ENCODE measurements at regions of chr6 and their contacts with region 1.

Region 1: DNA sequence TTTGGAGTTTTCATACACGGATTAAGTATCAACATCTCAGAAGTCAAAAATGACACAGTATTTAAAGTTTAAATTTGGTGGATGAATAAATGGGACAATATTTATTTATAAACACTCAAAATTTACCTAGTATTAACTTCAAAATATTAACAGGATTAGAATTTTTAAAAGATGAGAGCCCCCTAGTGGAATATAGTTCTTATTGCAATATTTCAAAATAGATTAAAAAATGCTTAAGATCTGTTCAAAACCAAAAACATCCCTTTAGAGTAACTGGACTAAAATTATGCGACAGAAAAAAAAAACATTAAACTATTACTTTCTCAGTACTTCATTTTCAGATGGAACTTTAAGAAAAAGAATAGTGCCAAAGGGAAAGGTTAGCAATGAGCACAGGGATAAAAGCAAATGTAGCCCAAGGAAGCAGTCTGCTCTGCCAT is 56.6 kb downstream of the SNX14 start:
- DNase-seq: no peak
- ATAC-seq: no peak

Region 2: GRCh38 chr6:85394853-85395538 is 142.1 kb before region 1 on chr6:
- intact Hi-C with region 1: no loop called
- DNase-seq: no peak
- ATAC-seq: no peak

Region 3: GRCh38 chr6:85620308-85620707 is 83.2 kb after region 1 on chr6:
- intact Hi-C with region 1: loop called in 1 of 2 experiments (anchors 10 kb)
- DNase-seq: no peak
- ATAC-seq: no peak

Measured in left cardiac atrium (tissue), 4 donors.